CD14-positive monocyte (primary cell): ENCODE measurements at regions of chr19 and their contacts with region 1.

Region 1: DNA sequence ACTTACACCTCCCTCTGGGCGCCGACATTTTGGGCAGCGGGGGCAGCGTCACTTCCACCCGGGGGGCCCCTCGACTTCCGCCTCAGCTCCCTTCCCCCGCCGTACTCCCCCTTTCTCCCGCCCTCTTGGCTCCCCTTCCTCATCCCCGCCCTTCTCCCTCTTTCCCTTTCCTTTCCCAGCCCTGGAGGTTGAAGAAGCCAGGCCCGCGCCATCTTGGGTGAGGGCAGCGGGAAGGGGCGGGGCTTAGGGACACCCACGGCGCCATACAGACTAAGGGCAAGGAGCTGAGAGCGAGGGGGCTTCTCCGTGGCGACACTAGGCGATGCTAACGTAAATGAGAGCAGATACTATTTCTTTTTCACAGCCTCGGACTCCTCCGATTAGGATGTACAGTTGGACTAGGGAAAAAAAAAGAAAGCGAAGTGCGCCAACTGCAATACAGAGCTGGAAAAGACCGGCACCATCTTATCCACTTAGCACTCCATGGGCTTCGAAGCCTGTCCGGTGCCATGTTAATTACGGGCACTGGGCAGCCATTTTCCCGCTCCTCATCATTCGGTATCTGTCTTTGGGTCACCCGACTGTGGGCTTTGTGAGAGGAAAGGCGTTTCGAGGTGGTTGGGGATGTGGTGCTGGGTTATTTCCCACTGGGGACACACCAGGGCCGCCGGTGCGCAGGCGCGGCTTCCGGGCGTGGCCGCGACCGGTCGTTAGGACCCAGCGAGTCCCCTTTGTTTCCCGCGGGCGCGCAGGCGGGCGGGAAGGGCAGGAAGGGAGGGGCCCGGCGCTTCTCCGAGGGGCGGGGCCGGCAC is at the start of gene FIZ1:
- DNase-seq: peak; percentile 96 to 99 (median 98)
- H3K4me3 ChIP-seq: peak within 1 kb of the TSS; percentile 69 to 92 (median 84)
- H3K4me3 Mint-ChIP-seq: peak within 1 kb of the TSS; percentile 95 to 100
- H3K27ac ChIP-seq: peak within 1 kb of the TSS; percentile 78 to 90
- H3K27ac Mint-ChIP-seq: peak within 1 kb of the TSS; percentile 91 to 99 (median 97)
- H3K4me1 ChIP-seq: peaks cover 22 to 39% of the 10 kb centered on the region in 2 donors
- H3K4me1 Mint-ChIP-seq: peaks cover 29% of the 10 kb centered on the region
- H3K27me3 ChIP-seq: no peaks in the 10 kb centered on the region
- H3K27me3 Mint-ChIP-seq: no peaks in the 10 kb centered on the region
- CTCF ChIP-seq: no peak
- polyA plus RNA-seq, gene FIZ1: 1.2 to 2.6 (median 1.6) TPM

Region 2: GRCh38 chr19:55407800-55408532 is 191.7 kb before region 1 on chr19:
- intact Hi-C with region 1: loop called in 1 of 2 experiments (anchors 10 kb)
- DNase-seq: peak; percentile 99 to 100 (median 100)
- H3K4me3 ChIP-seq: peak overlapping the region; percentile 32 to 86 (median 37)
- H3K4me3 Mint-ChIP-seq: peak overlapping the region; percentile 84 to 91
- H3K27ac ChIP-seq: peak overlapping the region; percentile 95 to 96
- H3K27ac Mint-ChIP-seq: peak overlapping the region; percentile 96 to 98 (median 97)
- H3K4me1 ChIP-seq: peaks cover 22 to 31% of the 10 kb centered on the region in 2 donors
- H3K4me1 Mint-ChIP-seq: peaks cover 26% of the 10 kb centered on the region
- H3K27me3 ChIP-seq: no peaks in the 10 kb centered on the region
- H3K27me3 Mint-ChIP-seq: peaks cover 3 to 6% (median 4%) of the 10 kb centered on the region in 3 donors
- CTCF ChIP-seq: no peak

Region 3: GRCh38 chr19:55549500-55550320 is 50.0 kb before region 1 on chr19:
- intact Hi-C with region 1: no loop called
- DNase-seq: no peak
- H3K4me3 ChIP-seq: no peak overlapping the region
- H3K4me3 Mint-ChIP-seq: no peak overlapping the region
- H3K27ac ChIP-seq: no peak overlapping the region
- H3K27ac Mint-ChIP-seq: no peak overlapping the region
- H3K4me1 ChIP-seq: peaks cover 0 to 7% of the 10 kb centered on the region in 2 donors
- H3K4me1 Mint-ChIP-seq: peaks cover 7% of the 10 kb centered on the region
- H3K27me3 ChIP-seq: no peaks in the 10 kb centered on the region
- H3K27me3 Mint-ChIP-seq: peaks cover 16 to 27% (median 25%) of the 10 kb centered on the region in 3 donors
- CTCF ChIP-seq: no peak

Region 4: DNA sequence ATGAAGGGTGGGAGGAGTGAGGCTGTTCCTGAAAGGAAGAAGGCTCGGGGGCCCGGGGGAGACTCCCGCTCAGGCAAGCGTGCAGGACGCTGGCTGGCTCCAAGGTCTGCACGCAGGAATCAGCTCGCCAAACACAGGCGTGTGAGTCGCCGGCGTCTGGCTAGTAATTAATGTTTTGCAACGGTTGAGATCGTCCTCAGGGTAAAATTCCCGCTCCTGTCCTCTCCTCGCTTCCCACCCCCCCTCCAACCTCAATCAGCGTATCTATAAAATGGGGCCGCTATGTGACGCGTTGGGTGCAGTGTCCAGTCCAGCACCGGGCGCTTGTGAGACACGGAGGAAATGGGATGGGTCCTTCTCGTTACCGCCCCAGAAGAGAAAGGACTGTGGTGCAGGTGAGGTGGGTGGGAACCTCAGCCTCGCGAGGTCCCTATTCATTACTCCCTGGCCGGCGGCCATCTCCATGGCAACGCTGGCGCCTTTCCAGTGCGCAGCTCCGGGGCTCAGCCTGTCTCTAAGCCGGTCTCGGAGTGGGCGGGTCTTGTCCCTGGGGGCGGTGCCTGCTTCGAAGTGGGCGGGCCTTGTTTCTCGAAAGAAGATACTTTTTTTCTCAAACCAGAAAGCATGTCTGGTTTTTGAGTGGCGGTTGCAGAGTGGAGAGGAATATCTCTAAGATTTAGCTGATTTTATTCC is 12.6 kb before region 1 on chr19:
- intact Hi-C with region 1: loop called in 1 of 2 experiments (anchors 1 kb)
- DNase-seq: peak; percentile 84 to 85 (median 84)
- H3K4me3 ChIP-seq: peak overlapping the region in 2 of 3 experiments; percentile 24 to 75
- H3K4me3 Mint-ChIP-seq: peak overlapping the region; percentile 76 to 92
- H3K27ac ChIP-seq: no peak overlapping the region
- H3K27ac Mint-ChIP-seq: peak overlapping the region in 2 of 7 donors; percentile 45 to 50
- H3K4me1 ChIP-seq: peaks cover 10 to 21% of the 10 kb centered on the region in 2 donors
- H3K4me1 Mint-ChIP-seq: peaks cover 20% of the 10 kb centered on the region
- H3K27me3 ChIP-seq: peaks cover 9 to 29% of the 10 kb centered on the region in 2 donors
- H3K27me3 Mint-ChIP-seq: peaks cover 25 to 37% (median 34%) of the 10 kb centered on the region in 3 donors
- CTCF ChIP-seq: no peak

Region 5: GRCh38 chr19:55624109-55625003 is 24.7 kb after region 1 on chr19 and contains the start of gene ZNF784:
- intact Hi-C with region 1: loop called in 1 of 2 experiments (anchors 2 kb)
- DNase-seq: peak; percentile 88 to 94 (median 91)
- H3K4me3 ChIP-seq: peak within 1 kb of the TSS; percentile 54 to 85 (median 63)
- H3K4me3 Mint-ChIP-seq: peak within 1 kb of the TSS; percentile 85 to 94
- H3K27ac ChIP-seq: peak within 1 kb of the TSS; percentile 78 to 86
- H3K27ac Mint-ChIP-seq: peak within 1 kb of the TSS; percentile 91 to 99 (median 98)
- H3K4me1 ChIP-seq: peaks cover 45 to 54% of the 10 kb centered on the region in 2 donors
- H3K4me1 Mint-ChIP-seq: peaks cover 40% of the 10 kb centered on the region
- H3K27me3 ChIP-seq: no peaks in the 10 kb centered on the region
- H3K27me3 Mint-ChIP-seq: peaks cover 0 to 8% (median 1%) of the 10 kb centered on the region in 3 donors
- CTCF ChIP-seq: no peak
- polyA plus RNA-seq, gene ZNF784: 1.5 to 5.5 (median 2.4) TPM

Region 6: GRCh38 chr19:55674841-55675660 is 75.4 kb after region 1 on chr19 and contains the start of gene EPN1:
- intact Hi-C with region 1: loop called in 1 of 2 experiments (anchors 1 kb)
- DNase-seq: peak; percentile 96 to 98 (median 96)
- H3K4me3 ChIP-seq: peak within 1 kb of the TSS; percentile 81 to 93 (median 83)
- H3K4me3 Mint-ChIP-seq: peak within 1 kb of the TSS; percentile 93 to 99
- H3K27ac ChIP-seq: peak within 1 kb of the TSS; percentile 71 to 87
- H3K27ac Mint-ChIP-seq: peak within 1 kb of the TSS; percentile 95 to 98 (median 96)
- H3K4me1 ChIP-seq: peaks cover 51% of the 10 kb centered on the region in 2 donors
- H3K4me1 Mint-ChIP-seq: peaks cover 57% of the 10 kb centered on the region
- H3K27me3 ChIP-seq: no peaks in the 10 kb centered on the region
- H3K27me3 Mint-ChIP-seq: no peaks in the 10 kb centered on the region
- CTCF ChIP-seq: no peak
- polyA plus RNA-seq, gene EPN1: 18.7 to 75.2 (median 19.2) TPM